ENCODE measurements at regions of chr2 and their contacts with region 1.

Region 1: DNA sequence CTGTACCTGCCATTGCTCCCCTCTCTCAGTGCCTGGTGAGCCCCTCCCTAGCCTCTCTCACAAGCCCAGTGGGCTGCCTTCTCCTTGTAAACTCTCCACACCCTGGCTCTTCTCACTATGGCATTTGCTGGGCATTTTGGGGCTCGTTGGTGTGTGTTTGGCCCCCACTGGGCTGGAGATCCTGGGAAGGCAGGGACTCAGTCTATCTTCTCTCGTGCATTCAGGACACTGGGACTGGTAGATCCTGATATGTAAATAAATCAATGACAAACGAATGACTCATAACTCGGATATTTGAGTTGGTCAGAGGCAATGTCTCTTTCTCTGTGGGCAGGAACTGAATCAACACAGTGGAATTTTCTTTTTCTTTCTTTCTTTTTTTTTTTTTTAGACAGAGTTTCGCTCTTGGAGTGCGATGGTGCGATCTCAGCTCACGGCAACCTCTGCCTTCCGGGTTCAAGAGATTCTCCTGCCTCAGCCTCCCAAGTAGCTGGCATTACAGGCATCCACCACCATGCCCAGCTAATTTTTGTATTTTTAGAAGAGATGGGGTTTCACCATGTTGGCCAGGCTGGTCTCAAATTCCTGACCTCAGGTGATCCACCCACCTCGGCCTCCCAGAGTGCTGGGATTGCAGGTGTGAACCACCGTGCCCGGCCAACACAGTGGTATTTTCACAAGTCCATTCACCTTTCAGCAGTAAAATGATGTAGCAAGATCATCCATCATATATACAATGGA is 144.6 kb upstream of the SPRED2 start:
- DNase-seq: peak; percentile 68
- H3K4me3 ChIP-seq: peak overlapping the region; percentile 20; the same call in 1 of the 2 replicates
- CTCF ChIP-seq: no peak

Region 2: DNA sequence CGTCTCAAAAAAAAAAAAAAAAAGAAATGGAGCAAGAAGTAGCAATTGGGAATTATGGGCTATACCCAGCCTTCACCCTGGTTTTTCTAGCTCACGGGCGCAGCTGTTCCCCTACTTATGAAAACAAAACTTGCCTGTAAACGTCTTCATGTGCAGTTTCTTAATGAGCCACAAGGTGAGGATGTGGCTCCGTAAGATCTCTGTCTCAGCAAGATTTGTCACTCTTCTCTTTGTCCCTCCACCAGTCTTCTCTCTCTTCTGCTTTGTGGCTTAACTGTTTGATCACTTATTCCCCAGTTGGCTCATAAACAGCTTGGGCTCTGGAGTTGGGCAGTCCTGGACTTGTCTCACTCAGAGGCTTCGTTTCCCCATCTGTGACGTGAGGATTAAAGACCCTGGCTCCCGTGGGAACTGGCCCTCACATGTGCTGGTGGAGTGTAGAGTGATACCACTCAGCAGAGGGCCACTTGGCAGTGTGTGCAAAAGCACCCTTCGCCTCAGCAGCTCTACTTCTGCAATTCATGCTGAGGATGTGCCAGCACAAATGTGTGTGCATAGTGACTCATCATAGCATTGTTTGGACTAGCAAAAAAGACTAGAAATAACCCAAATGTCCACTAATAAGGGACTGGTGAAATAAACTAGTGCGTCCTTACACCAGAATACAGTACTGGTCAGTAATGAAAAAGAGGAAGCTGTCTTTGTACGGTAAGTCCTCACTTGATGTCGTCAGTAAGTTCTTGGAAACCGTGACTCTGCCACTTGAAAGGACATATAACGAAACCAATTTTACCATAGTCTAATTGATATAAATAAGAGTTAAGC is 512.1 kb before region 1 on chr2:
- CTCF ChIA-PET with region 1: interaction called, 10 read pairs
- POLR2A ChIA-PET with region 1: no interaction called
- DNase-seq: peak; percentile 76
- H3K4me3 ChIP-seq: no peak overlapping the region; the same call in 1 of the 2 replicates
- CTCF ChIP-seq: peak; percentile 57

Region 3: DNA sequence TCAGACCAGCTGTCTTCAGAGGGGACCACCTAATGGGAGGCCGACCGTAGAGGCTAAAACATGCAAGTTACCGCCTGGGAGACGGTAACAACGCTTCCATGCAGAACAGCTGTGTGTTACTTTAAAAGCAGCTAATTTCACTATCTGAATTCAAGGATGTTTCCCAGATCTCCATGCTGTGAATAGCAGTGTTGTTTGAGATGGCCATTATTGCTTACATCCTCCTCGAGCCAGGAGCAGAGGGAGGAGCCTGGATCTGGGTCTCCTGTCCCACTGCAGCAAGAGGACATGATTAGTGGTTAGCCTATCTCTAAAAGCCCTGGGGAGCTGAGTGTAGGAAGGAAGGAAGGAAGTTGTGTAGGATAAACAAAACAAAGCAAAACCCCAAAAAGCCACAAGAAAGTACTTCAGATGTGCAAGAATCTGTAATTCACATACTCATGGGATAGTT is 298.5 kb before region 1 on chr2:
- CTCF ChIA-PET with region 1: interaction called, 19 read pairs
- POLR2A ChIA-PET with region 1: no interaction called
- DNase-seq: no peak
- H3K4me3 ChIP-seq: no peak overlapping the region
- CTCF ChIP-seq: no peak

Measured in AG04449 (cell line).